ENCODE measurements at regions of chrX and their contacts with region 1.

Region 1: GRCh38 chrX:15349046-15349445 is 13.7 kb upstream of the PIGA start:
- DNase-seq: peak in 1 of 2 donors; percentile 9
- ATAC-seq: peak; percentile 77

Region 2: GRCh38 chrX:15158736-15159406 is 190.2 kb before region 1 on chrX:
- intact Hi-C with region 1: no loop called
- DNase-seq: no peak
- ATAC-seq: no peak

Region 3: GRCh38 chrX:15468036-15468435 is 119.0 kb after region 1 on chrX:
- intact Hi-C with region 1: loop called in 1 of 2 experiments (anchors 5 kb)
- DNase-seq: peak in 1 of 2 donors; percentile 15
- ATAC-seq: peak; percentile 38

Region 4: DNA sequence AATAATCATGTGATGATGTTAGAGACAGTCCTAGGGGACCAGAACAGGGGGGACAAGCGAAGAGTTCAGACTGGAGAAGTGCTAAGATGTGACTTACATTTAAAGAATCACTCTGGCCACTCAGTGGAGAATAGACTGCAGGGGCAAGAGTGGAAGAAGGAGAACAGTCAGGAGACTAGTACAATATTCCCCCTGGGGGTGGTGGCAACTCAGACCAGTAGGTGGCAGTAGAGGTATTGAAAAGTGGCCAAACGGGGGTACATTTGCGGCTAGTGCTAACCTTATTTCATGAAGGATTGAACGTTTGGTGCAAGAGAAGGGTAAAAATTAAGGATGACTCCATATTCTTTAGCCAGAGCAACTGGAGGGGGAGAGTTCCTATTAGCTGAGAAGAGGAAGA is 148.8 kb after region 1 on chrX:
- intact Hi-C with region 1: no loop called
- DNase-seq: peak in 1 of 2 donors; percentile 50
- ATAC-seq: peak; percentile 37

Region 5: DNA sequence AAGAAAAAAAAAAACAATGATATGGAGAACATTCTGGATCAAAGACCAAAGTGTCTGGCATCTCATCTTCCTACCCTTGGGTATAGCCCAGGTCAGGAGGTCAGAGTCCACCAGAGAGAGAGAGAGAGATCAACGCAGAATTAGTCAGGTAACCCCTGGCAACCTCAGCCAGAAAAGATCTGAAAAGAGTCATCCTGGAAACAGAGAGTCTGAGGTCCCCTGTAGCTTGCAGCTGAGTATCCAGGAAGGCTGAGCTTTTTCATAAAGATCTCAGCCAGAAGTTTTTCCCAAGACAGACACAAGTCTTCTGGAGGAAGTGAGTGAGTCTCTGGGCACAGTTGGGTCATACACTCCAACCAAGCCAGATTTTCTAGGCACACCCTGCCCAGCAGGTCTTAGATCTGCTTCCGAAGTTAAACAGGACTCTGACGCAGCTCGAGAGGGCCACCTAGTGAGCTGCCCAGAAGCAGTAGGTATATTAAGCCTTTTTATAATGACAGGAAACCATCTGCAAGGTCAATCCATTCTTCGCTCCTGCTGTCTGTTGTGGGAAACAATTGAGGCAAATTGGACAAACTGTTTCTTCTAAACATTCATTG is 216.0 kb after region 1 on chrX:
- intact Hi-C with region 1: loop called in 1 of 2 experiments (anchors 10 kb)
- DNase-seq: peak; percentile 40 to 71
- ATAC-seq: peak; percentile 92

Measured in left colon (tissue), 2 donors.